Left ventricle myocardium inferior (tissue), 1 donor: ENCODE measurements at regions of chr20 and their contacts with region 1.

Region 1: GRCh38 chr20:8131598-8132483 is at the start of gene PLCB1:
- DNase-seq: peak; percentile 86
- H3K4me3 ChIP-seq: peak within 1 kb of the TSS; percentile 80
- H3K27ac ChIP-seq: peak within 1 kb of the TSS; percentile 87
- H3K4me1 ChIP-seq: peaks cover 37% of the 10 kb centered on the region
- H3K27me3 ChIP-seq: peaks cover 17% of the 10 kb centered on the region
- CTCF ChIP-seq: peak; percentile 88
- total RNA-seq, gene PLCB1: 6.0 TPM

Region 2: GRCh38 chr20:7994809-7995208 is 137.0 kb before region 1 on chr20:
- intact Hi-C with region 1: no loop called
- DNase-seq: no peak
- H3K4me3 ChIP-seq: no peak overlapping the region
- H3K27ac ChIP-seq: no peak overlapping the region
- H3K4me1 ChIP-seq: no peaks in the 10 kb centered on the region
- H3K27me3 ChIP-seq: no peaks in the 10 kb centered on the region
- CTCF ChIP-seq: no peak

Region 3: DNA sequence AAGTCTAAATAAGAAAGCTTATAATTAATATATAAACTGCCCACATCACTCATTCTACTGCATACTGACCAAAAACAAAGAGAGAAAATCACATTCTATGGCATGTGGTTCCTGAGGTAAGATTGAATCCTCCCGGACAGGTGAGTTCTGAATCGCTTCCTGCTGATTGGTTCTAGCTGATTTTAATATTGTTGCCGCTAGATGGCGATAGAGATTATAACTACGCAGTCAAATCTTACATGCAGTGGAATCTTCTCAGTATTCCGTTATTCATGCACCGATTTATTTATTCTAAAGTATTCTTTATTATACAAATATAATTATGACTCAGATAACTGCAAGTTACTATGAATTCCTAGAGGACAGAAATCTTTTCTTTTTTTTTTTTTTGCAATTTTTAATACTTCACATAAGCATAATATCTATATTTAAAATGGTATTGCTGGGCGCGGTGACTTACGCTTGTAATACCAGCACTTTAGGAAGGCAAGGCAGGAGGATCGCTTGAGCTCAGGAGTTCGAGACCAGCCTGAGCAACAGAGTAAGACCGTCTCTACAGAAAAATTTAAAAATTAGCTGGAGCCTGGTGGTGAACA is 88.1 kb before region 1 on chr20:
- intact Hi-C with region 1: loop called (anchors 10 kb)
- DNase-seq: no peak
- H3K4me3 ChIP-seq: no peak overlapping the region
- H3K27ac ChIP-seq: no peak overlapping the region
- H3K4me1 ChIP-seq: no peaks in the 10 kb centered on the region
- H3K27me3 ChIP-seq: no peaks in the 10 kb centered on the region
- CTCF ChIP-seq: peak; percentile 78

Region 4: DNA sequence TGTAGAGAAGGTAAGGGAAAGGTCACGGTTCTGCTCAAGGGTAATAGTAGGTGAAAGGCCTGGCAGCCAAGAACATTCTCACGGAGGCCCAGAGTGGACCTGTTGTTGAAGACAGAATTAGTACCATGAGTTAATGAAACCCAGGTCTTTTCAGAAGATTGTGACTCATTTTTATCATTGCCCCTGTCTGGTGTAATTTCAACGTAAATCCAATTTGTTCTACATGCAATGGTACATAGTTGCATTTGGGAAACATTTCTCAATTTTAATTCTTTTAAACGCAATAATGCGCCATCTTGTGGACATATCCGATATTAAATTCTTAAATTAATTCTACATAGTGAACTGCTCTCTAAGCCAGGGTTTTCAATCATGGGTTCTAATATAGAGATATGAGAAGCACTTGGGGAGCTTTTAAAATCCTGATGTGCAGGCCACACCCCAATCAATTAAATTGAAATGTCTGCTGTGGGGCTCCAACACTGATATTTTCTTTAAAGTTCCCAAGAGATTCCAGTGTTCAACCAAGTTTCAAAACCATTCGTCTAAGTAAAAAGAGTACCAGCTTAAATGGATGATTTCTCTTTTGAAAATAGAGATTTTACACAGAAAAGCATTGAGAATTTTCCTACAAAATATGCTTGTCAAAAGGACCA is 257.7 kb after region 1 on chr20:
- intact Hi-C with region 1: loop called (anchors 5 kb)
- DNase-seq: no peak
- H3K4me3 ChIP-seq: no peak overlapping the region
- H3K27ac ChIP-seq: peak overlapping the region; percentile 24
- H3K4me1 ChIP-seq: peaks cover 50% of the 10 kb centered on the region
- H3K27me3 ChIP-seq: no peaks in the 10 kb centered on the region
- CTCF ChIP-seq: peak; percentile 64

Region 5: GRCh38 chr20:8909596-8909995 is 777.8 kb after region 1 on chr20:
- intact Hi-C with region 1: no loop called
- DNase-seq: no peak
- H3K4me3 ChIP-seq: no peak overlapping the region
- H3K27ac ChIP-seq: no peak overlapping the region
- H3K4me1 ChIP-seq: no peaks in the 10 kb centered on the region
- H3K27me3 ChIP-seq: no peaks in the 10 kb centered on the region
- CTCF ChIP-seq: no peak